CD4-positive, alpha-beta memory T cell (primary cell): ENCODE measurements at regions of chr6 and their contacts with region 1.

Region 1: GRCh38 chr6:158910484-158911348 is 89.3 kb downstream of the RSPH3 start:
- DNase-seq: peak in 2 of 5 donors; percentile 10 to 21
- H3K4me3 ChIP-seq: peak overlapping the region in 1 of 2 donors; percentile 21
- H3K4me3 Mint-ChIP-seq: peak overlapping the region; percentile 35 to 91 (median 66)
- H3K27ac ChIP-seq: no peak overlapping the region
- H3K27ac Mint-ChIP-seq: peak overlapping the region in 6 of 7 donors; percentile 23 to 83 (median 62)
- H3K4me1 ChIP-seq: peaks cover 33% of the 10 kb centered on the region
- H3K4me1 Mint-ChIP-seq: peaks cover 21 to 55% (median 31%) of the 10 kb centered on the region in 4 donors
- H3K27me3 ChIP-seq: no peaks in the 10 kb centered on the region
- H3K27me3 Mint-ChIP-seq: peaks cover 0 to 1% of the 10 kb centered on the region in 2 donors

Region 2: DNA sequence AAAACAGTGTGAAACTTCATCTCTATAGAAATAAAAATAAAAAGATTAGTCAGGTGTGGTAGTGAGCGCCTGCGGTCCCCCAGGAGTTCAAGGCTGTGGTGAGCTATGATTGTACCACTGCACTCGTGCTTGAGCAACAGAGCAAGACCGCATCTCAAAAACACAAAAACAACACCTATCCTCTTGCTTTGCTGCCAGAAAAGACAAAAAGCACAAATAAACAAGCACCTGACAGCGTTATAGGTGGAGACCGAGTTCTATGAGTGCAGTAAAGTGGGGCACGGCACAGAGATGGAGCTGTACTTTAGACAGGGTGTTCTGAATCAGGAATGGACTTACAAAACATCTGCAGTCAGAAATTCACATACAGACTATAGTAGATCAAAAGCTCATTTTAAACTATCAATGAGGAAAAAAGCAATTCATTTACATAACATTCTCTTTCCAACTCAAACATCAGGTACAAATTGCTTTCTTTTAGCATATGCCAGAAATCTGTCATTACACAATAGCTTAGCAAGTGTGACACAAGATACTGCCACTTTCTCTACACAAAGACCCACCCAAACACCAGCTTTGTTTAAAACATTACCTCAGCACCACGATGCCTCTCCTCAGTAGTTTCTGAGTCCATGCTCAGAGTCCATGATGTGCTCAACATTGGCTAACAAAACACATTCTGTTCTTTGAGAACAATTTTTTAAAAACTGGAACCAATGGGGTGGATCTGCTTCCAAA is 101.6 kb before region 1 on chr6:
- CTCF ChIA-PET with region 1: no interaction called
- POLR2A ChIA-PET with region 1: interaction called, 14 read pairs
- intact Hi-C with region 1: no loop called
- DNase-seq: peak; percentile 56 to 72 (median 71)
- H3K4me3 ChIP-seq: peak overlapping the region in 1 of 2 donors; percentile 10
- H3K4me3 Mint-ChIP-seq: peak overlapping the region; percentile 45 to 80 (median 64)
- H3K27ac ChIP-seq: peak overlapping the region; percentile 3
- H3K27ac Mint-ChIP-seq: peak overlapping the region; percentile 81 to 96 (median 88)
- H3K4me1 ChIP-seq: peaks cover 100% of the 10 kb centered on the region
- H3K4me1 Mint-ChIP-seq: peaks cover 86 to 99% (median 92%) of the 10 kb centered on the region in 4 donors
- H3K27me3 ChIP-seq: no peaks in the 10 kb centered on the region
- H3K27me3 Mint-ChIP-seq: no peaks in the 10 kb centered on the region

Region 3: GRCh38 chr6:158894193-158894592 is 16.5 kb before region 1 on chr6:
- CTCF ChIA-PET with region 1: no interaction called
- POLR2A ChIA-PET with region 1: no interaction called
- intact Hi-C with region 1: no loop called
- DNase-seq: no peak
- H3K4me3 ChIP-seq: no peak overlapping the region
- H3K4me3 Mint-ChIP-seq: no peak overlapping the region
- H3K27ac ChIP-seq: no peak overlapping the region
- H3K27ac Mint-ChIP-seq: no peak overlapping the region
- H3K4me1 ChIP-seq: no peaks in the 10 kb centered on the region
- H3K4me1 Mint-ChIP-seq: peaks cover 0 to 2% (median 0%) of the 10 kb centered on the region in 4 donors
- H3K27me3 ChIP-seq: no peaks in the 10 kb centered on the region
- H3K27me3 Mint-ChIP-seq: no peaks in the 10 kb centered on the region